ENCODE measurements at regions of chr19 and their contacts with region 1.

Region 1: GRCh38 chr19:48646001-48646721 is at the start of gene CA11:
- DNase-seq: peak; percentile 95
- H3K4me3 ChIP-seq: peak within 1 kb of the TSS; percentile 48 to 63 (median 58)
- H3K27ac ChIP-seq: peak within 1 kb of the TSS; percentile 88 to 94 (median 92)
- H3K4me1 ChIP-seq: peaks cover 0 to 22% (median 20%) of the 10 kb centered on the region in 4 donors
- H3K27me3 ChIP-seq: no peaks in the 10 kb centered on the region
- CTCF ChIP-seq: peak; percentile 91 to 97 (median 93)
- EP300 ChIP-seq: no peak
- POLR2A ChIP-seq: peak; percentile 59 to 64
- total RNA-seq, gene CA11: 10.0 to 29.6 (median 14.7) TPM

Region 2: GRCh38 chr19:48674921-48675824 is 29.0 kb after region 1 on chr19:
- intact Hi-C with region 1: loop called (anchors 2 kb)
- DNase-seq: peak; percentile 92
- H3K4me3 ChIP-seq: no peak overlapping the region
- H3K27ac ChIP-seq: peak overlapping the region in 1 of 4 donors; percentile 20
- H3K4me1 ChIP-seq: peaks cover 0 to 12% (median 9%) of the 10 kb centered on the region in 4 donors
- H3K27me3 ChIP-seq: no peaks in the 10 kb centered on the region
- CTCF ChIP-seq: peak; percentile 81 to 91 (median 86)
- EP300 ChIP-seq: no peak
- POLR2A ChIP-seq: no peak

Region 3: GRCh38 chr19:48713864-48714758 is 68.0 kb after region 1 on chr19:
- intact Hi-C with region 1: loop called (anchors 1 kb)
- DNase-seq: peak; percentile 100
- H3K4me3 ChIP-seq: peak overlapping the region; percentile 52 to 75 (median 62)
- H3K27ac ChIP-seq: peak overlapping the region; percentile 84 to 88 (median 86)
- H3K4me1 ChIP-seq: peaks cover 0 to 49% (median 40%) of the 10 kb centered on the region in 4 donors
- H3K27me3 ChIP-seq: no peaks in the 10 kb centered on the region
- CTCF ChIP-seq: no peak
- EP300 ChIP-seq: no peak
- POLR2A ChIP-seq: peak in 1 of 2 donors; percentile 58

Region 4: GRCh38 chr19:48738557-48739399 is 92.6 kb after region 1 on chr19:
- intact Hi-C with region 1: loop called (anchors 1 kb)
- DNase-seq: peak; percentile 96
- H3K4me3 ChIP-seq: peak overlapping the region; percentile 33 to 63 (median 48)
- H3K27ac ChIP-seq: peak overlapping the region; percentile 41 to 77 (median 64)
- H3K4me1 ChIP-seq: peaks cover 0 to 15% (median 8%) of the 10 kb centered on the region in 4 donors
- H3K27me3 ChIP-seq: peaks cover 0 to 19% (median 0%) of the 10 kb centered on the region in 3 donors
- CTCF ChIP-seq: peak in 1 of 4 experiments; percentile 40
- EP300 ChIP-seq: no peak
- POLR2A ChIP-seq: no peak

Region 5: DNA sequence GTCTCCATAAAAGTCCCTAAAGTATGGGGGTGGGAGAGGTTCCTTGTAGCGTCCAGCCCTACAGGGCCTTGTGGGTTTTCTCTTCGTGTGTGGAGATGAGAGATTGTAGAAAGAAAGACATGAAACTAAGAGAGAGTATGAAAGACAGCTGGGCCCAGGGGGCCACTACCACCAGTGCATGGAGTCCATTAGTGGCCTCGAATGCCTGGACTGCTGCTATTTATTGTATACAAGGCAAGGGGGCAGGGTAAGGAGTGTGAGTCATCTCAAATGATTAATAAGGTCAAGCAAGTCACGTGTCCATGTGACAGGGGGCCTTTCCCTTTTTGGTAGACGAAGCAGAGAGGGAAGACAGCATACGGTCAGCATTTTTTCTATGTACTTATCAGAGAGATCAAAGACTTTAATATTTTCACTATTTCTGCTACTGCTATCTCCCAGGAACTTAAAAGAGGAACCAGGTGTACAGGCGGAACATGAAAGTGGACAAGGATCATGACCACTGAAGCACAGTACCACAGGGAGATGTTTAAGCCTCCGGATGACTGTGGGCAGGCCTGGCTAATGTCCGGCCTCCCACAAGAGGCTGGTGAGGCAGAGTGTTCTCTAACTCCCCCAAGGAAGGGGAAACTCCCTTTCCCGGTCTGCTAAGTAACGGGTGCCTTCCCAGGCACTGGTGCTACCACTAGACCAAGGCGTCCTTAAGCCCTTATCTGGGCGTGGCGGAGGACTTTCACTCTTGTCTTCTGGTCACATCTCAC is 134.7 kb after region 1 on chr19:
- intact Hi-C with region 1: loop called (anchors 2 kb)
- DNase-seq: no peak
- H3K4me3 ChIP-seq: no peak overlapping the region
- H3K27ac ChIP-seq: peak overlapping the region; percentile 40 to 55 (median 46)
- H3K4me1 ChIP-seq: peaks cover 0 to 14% (median 6%) of the 10 kb centered on the region in 4 donors
- H3K27me3 ChIP-seq: no peaks in the 10 kb centered on the region
- CTCF ChIP-seq: no peak
- EP300 ChIP-seq: no peak
- POLR2A ChIP-seq: no peak

Region 6: GRCh38 chr19:48835734-48836088 is 189.6 kb after region 1 on chr19:
- intact Hi-C with region 1: loop called (anchors 5 kb)
- DNase-seq: peak; percentile 98
- H3K4me3 ChIP-seq: peak overlapping the region; percentile 30 to 51 (median 41)
- H3K27ac ChIP-seq: peak overlapping the region; percentile 71 to 86 (median 82)
- H3K4me1 ChIP-seq: peaks cover 0 to 27% (median 21%) of the 10 kb centered on the region in 4 donors
- H3K27me3 ChIP-seq: no peaks in the 10 kb centered on the region
- CTCF ChIP-seq: peak; percentile 86 to 98 (median 92)
- EP300 ChIP-seq: no peak
- POLR2A ChIP-seq: peak in 1 of 2 donors; percentile 42